Naive thymus-derived CD4-positive, alpha-beta T cell (primary cell): ENCODE measurements at regions of chr9 and their contacts with region 1.

Region 1: DNA sequence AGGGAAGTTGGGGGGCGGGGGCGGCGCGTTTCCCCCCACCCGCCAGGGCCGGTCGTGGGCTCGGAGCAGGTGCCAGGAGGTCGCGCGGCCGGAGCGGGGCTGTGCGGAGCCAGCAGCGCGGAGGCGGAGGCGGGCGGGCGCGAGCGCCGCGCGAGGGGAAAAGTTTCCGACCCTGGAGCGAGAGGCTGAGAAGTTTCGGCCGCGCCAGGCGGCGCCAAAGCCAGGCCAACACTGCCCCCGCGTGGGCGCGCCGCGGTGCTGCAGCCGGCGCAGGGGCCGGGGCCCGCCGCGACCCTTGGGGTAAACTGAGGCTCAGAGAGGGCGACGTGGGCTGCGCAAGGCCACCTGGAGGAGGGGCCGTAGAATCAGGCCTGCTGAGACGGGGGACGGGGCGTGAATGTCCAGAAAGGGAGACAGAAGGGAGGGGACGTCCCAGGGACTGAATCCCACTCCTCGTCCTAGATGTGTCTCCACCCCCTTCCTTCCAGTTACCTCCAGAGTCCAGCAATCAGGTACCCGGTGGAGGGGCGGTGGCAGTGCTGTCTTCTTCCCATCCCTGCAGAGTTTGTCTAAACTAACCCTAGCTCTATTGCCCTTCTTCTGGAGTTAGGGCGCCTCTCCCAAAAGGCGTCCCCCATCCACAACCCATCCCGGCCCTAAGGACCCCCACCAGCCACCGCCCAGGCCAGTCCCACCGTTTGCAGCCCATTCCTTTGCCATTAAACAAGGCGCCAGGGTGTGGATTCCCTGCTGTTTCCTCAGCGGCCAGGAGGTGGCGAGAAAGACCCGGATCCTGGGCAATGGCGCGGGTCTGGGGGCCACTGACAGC is 10.2 kb downstream of the C9orf50 start:
- DNase-seq: peak; percentile 53 to 79 (median 71)
- ATAC-seq: peak; percentile 83
- H3K4me3 ChIP-seq: peak overlapping the region; percentile 52
- H3K4me3 Mint-ChIP-seq: peak overlapping the region; percentile 57 to 96 (median 80)
- H3K27ac ChIP-seq: peak overlapping the region; percentile 17
- H3K27ac Mint-ChIP-seq: peak overlapping the region in 5 of 9 donors; percentile 62 to 85 (median 67)
- H3K4me1 ChIP-seq: peaks cover 19 to 21% of the 10 kb centered on the region in 2 donors
- H3K4me1 Mint-ChIP-seq: peaks cover 13 to 44% (median 30%) of the 10 kb centered on the region in 7 donors
- H3K27me3 ChIP-seq: no peaks in the 10 kb centered on the region
- H3K27me3 Mint-ChIP-seq: peaks cover 0 to 4% (median 0%) of the 10 kb centered on the region in 5 donors

Region 2: GRCh38 chr9:129131300-129132145 is 479.2 kb before region 1 on chr9:
- CTCF ChIA-PET with region 1: interaction called, 23 read pairs
- POLR2A ChIA-PET with region 1: interaction called, 5 read pairs
- intact Hi-C with region 1: loop called in 1 of 2 experiments (anchors 1 kb)
- DNase-seq: peak; percentile 71 to 90 (median 81)
- ATAC-seq: peak; percentile 100
- H3K4me3 ChIP-seq: no peak overlapping the region
- H3K4me3 Mint-ChIP-seq: peak overlapping the region in 2 of 10 donors; percentile 10 to 23
- H3K27ac ChIP-seq: peak overlapping the region; percentile 24
- H3K27ac Mint-ChIP-seq: peak overlapping the region in 6 of 9 donors; percentile 11 to 54 (median 46)
- H3K4me1 ChIP-seq: no peaks in the 10 kb centered on the region
- H3K4me1 Mint-ChIP-seq: peaks cover 0 to 9% (median 6%) of the 10 kb centered on the region in 7 donors
- H3K27me3 ChIP-seq: no peaks in the 10 kb centered on the region
- H3K27me3 Mint-ChIP-seq: no peaks in the 10 kb centered on the region

Region 3: GRCh38 chr9:129487642-129488409 is 122.9 kb before region 1 on chr9:
- CTCF ChIA-PET with region 1: no interaction called
- POLR2A ChIA-PET with region 1: no interaction called
- intact Hi-C with region 1: loop called (anchors 2 to 5 kb)
- DNase-seq: peak in 5 of 9 donors; percentile 29 to 54 (median 43)
- ATAC-seq: peak; percentile 3
- H3K4me3 ChIP-seq: peak overlapping the region; percentile 70
- H3K4me3 Mint-ChIP-seq: peak overlapping the region; percentile 75 to 92 (median 90)
- H3K27ac ChIP-seq: peak overlapping the region; percentile 66
- H3K27ac Mint-ChIP-seq: peak overlapping the region; percentile 87 to 99 (median 94)
- H3K4me1 ChIP-seq: peaks cover 32 to 46% of the 10 kb centered on the region in 2 donors
- H3K4me1 Mint-ChIP-seq: peaks cover 36 to 68% (median 58%) of the 10 kb centered on the region in 7 donors
- H3K27me3 ChIP-seq: no peaks in the 10 kb centered on the region
- H3K27me3 Mint-ChIP-seq: no peaks in the 10 kb centered on the region

Region 4: GRCh38 chr9:129569502-129570449 is 40.9 kb before region 1 on chr9:
- CTCF ChIA-PET with region 1: no interaction called
- POLR2A ChIA-PET with region 1: no interaction called
- intact Hi-C with region 1: loop called in 1 of 2 experiments (anchors 5 kb)
- DNase-seq: no peak
- ATAC-seq: peak; percentile 53
- H3K4me3 ChIP-seq: peak overlapping the region; percentile 17
- H3K4me3 Mint-ChIP-seq: peak overlapping the region; percentile 67 to 87 (median 80)
- H3K27ac ChIP-seq: no peak overlapping the region
- H3K27ac Mint-ChIP-seq: peak overlapping the region in 3 of 9 donors; percentile 36 to 58 (median 40)
- H3K4me1 ChIP-seq: peaks cover 3 to 8% of the 10 kb centered on the region in 2 donors
- H3K4me1 Mint-ChIP-seq: peaks cover 11 to 23% (median 14%) of the 10 kb centered on the region in 7 donors
- H3K27me3 ChIP-seq: peaks cover 0 to 8% of the 10 kb centered on the region in 2 donors
- H3K27me3 Mint-ChIP-seq: peaks cover 14 to 30% (median 26%) of the 10 kb centered on the region in 5 donors

Region 5: DNA sequence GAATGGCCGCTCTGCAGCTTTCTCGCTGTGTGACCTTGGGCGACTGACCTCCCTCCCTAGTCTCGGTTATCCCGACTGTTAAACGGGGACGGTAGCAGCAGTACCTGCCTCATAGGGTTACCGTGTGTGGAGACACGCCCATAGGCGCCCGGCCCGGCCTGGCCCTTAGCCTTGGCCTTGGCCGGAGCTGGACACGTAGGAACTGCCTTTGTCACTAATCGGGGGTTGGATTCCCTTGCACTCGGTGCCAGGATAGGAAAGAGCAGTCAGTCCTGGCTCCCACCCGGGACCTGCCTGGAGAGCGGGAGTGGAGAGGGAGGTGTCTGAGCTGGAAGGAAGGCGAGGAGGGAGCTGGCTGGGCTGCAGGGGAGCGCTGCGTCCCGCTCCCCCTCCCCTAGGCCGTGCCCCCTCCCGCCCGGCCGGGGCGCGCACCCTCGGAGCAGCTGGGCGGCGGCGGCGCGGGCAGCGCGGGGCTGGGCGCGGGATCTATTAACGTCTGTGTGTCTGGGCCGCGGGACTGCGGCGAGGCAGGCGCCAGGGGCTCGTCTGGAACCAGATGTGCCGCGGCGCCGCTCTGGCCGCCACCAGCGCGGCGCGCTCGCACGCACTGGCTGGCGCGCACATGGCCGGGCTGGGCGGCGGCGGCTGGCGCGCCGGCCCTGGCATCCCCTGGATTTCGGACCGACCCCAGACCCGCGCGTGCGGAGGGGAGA is 86.4 kb after region 1 on chr9:
- CTCF ChIA-PET with region 1: no interaction called
- POLR2A ChIA-PET with region 1: no interaction called
- intact Hi-C with region 1: no loop called
- DNase-seq: peak in 1 of 9 donors; percentile 48
- ATAC-seq: no peak
- H3K4me3 ChIP-seq: no peak overlapping the region
- H3K4me3 Mint-ChIP-seq: peak overlapping the region in 9 of 10 donors; percentile 21 to 85 (median 59)
- H3K27ac ChIP-seq: no peak overlapping the region
- H3K27ac Mint-ChIP-seq: peak overlapping the region in 3 of 9 donors; percentile 34 to 67 (median 60)
- H3K4me1 ChIP-seq: no peaks in the 10 kb centered on the region
- H3K4me1 Mint-ChIP-seq: peaks cover 0 to 4% (median 3%) of the 10 kb centered on the region in 7 donors
- H3K27me3 ChIP-seq: no peaks in the 10 kb centered on the region
- H3K27me3 Mint-ChIP-seq: peaks cover 25 to 56% (median 33%) of the 10 kb centered on the region in 5 donors